Prostate gland (tissue), 2 donors: ENCODE measurements at regions of chr2 and their contacts with region 1.

Region 1: GRCh38 chr2:210171309-210172203 is at the start of gene KANSL1L:
- DNase-seq: peak; percentile 99
- H3K4me3 ChIP-seq: peak within 1 kb of the TSS; percentile 95
- H3K27ac ChIP-seq: peak within 1 kb of the TSS; percentile 100
- H3K4me1 ChIP-seq: peaks cover 10% of the 10 kb centered on the region
- H3K27me3 ChIP-seq: no peaks in the 10 kb centered on the region
- CTCF ChIP-seq: peak in 1 of 4 experiments; percentile 27
- POLR2A ChIP-seq: peak; percentile 94
- total RNA-seq, gene KANSL1L: 36.1 to 40.3 TPM

Region 2: GRCh38 chr2:210002158-210003157 is 169.1 kb before region 1 on chr2 and contains the start of gene RPE:
- intact Hi-C with region 1: loop called (anchors 5 kb)
- DNase-seq: peak; percentile 93
- H3K4me3 ChIP-seq: peak within 1 kb of the TSS; percentile 69 to 85
- H3K27ac ChIP-seq: peak within 1 kb of the TSS; percentile 73 to 74
- H3K4me1 ChIP-seq: no peaks in the 10 kb centered on the region
- H3K27me3 ChIP-seq: no peaks in the 10 kb centered on the region
- CTCF ChIP-seq: no peak
- POLR2A ChIP-seq: peak; percentile 48
- total RNA-seq, gene RPE: 44.1 to 60.1 TPM

Region 3: DNA sequence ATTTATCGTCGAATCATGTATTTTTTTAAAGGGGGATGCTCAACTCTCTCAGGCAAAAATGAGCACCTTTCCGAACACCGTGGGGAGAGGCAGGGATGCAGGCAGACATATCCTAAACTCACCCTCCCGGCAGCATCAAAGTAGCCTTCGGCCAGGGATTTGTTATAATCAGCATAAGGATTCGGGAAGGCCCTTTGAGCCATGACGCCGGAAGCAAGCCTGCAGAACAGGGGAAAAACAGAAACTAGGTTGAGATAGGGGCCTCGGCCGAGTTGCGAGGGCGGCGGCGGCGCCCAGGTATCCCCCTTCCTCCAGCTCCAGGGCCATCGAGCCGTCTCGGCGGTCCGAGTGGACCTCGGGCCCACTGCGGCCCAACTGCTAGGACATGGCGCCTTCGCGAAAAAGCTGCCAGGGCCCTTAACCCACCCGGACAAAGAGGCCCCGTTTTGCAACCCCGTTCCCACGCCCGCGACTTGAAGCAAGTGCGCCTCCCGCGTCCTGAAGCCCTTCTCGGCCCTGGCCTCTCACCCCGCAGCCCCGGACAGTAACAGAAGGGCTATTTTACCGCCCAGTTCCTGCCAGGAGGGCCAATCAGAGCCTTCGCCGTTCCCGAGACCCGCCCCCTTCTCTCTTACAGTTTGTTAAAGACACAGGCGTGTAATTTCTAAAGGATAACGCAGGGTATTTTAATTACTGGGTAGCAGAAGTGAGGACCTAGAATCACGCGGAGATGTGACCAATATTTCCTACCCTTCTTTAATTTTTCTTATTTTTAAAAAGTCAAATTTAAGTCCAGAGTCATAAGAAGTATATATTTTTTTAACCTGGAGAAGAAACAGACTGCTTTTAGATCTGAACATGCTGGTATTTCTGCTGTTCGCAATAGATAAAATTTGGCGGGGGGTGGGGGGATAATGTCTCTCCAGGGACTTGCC is 304.9 kb after region 1 on chr2 and contains the start of gene LANCL1:
- intact Hi-C with region 1: loop called (anchors 5 kb)
- DNase-seq: peak; percentile 90
- H3K4me3 ChIP-seq: peak within 1 kb of the TSS; percentile 52 to 69
- H3K27ac ChIP-seq: peak within 1 kb of the TSS; percentile 58 to 62
- H3K4me1 ChIP-seq: no peaks in the 10 kb centered on the region
- H3K27me3 ChIP-seq: no peaks in the 10 kb centered on the region
- CTCF ChIP-seq: peak in 1 of 4 experiments; percentile 7
- POLR2A ChIP-seq: peak; percentile 72
- total RNA-seq, gene LANCL1: 48.2 to 50.1 TPM

Region 4: DNA sequence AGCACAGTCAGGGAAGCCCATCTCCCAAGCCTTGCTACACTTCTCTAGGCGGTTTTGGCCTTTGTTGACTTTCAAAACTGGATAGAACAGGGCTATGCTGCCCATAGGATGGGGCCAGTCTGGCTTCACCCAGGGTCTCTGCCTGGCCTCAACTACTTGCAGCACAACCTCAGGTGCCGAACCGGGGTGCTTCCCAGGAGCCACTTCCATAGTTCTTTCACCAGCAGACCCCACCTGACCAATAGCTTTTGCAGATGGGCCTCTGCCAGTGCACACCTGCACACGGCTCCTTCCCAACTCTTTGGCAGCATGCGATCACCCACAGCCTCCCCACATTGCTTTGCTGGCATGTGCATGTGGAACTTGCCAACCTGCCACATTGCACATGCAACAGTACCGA is 716.5 kb after region 1 on chr2:
- intact Hi-C with region 1: no loop called
- DNase-seq: no peak
- H3K4me3 ChIP-seq: no peak overlapping the region
- H3K27ac ChIP-seq: no peak overlapping the region
- H3K4me1 ChIP-seq: no peaks in the 10 kb centered on the region
- H3K27me3 ChIP-seq: no peaks in the 10 kb centered on the region
- CTCF ChIP-seq: no peak
- POLR2A ChIP-seq: no peak